ENCODE measurements at regions of chr2 and their contacts with region 1.

Region 1: GRCh38 chr2:112749755-112750559 is 14.5 kb downstream of the CKAP2L start:
- DNase-seq: peak; percentile 79
- CTCF ChIP-seq: peak; percentile 96

Region 2: GRCh38 chr2:112626604-112627059 is 123.3 kb before region 1 on chr2:
- CTCF ChIA-PET with region 1: interaction called, 15 read pairs
- POLR2A ChIA-PET with region 1: no interaction called
- DNase-seq: peak; percentile 70
- CTCF ChIP-seq: peak; percentile 93

Region 3: GRCh38 chr2:112774536-112775285 is 24.8 kb after region 1 on chr2:
- CTCF ChIA-PET with region 1: interaction called, 13 read pairs
- POLR2A ChIA-PET with region 1: no interaction called
- DNase-seq: no peak
- CTCF ChIP-seq: no peak

Region 4: DNA sequence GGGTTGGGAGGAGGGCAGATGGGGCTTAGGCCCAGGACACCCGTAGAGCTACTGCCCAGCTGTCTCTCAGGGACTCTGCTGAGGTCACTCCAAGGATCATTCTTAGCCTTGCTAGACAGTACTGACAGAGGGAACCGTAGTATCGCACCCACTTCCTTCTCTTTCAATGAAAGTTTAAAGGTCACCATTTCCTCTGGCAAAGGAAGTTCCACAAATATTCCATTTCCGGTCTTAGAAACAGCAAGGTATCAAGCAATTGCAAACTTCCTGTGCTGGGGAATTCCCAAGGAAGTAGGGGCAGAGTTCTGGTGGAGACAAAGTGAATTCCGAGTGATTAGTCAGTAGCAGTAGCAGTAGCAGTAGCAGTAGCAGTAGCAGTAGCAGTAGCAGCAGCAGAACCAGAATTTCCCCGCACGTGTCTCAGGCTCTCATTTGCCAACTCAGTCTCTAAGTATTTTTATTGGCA is 61.9 kb after region 1 on chr2:
- CTCF ChIA-PET with region 1: interaction called, 11 read pairs
- POLR2A ChIA-PET with region 1: no interaction called
- DNase-seq: no peak
- CTCF ChIP-seq: no peak

Region 5: GRCh38 chr2:112891385-112891831 is 141.5 kb after region 1 on chr2:
- CTCF ChIA-PET with region 1: interaction called, 275 read pairs
- POLR2A ChIA-PET with region 1: no interaction called
- DNase-seq: no peak
- CTCF ChIP-seq: no peak

Region 6: DNA sequence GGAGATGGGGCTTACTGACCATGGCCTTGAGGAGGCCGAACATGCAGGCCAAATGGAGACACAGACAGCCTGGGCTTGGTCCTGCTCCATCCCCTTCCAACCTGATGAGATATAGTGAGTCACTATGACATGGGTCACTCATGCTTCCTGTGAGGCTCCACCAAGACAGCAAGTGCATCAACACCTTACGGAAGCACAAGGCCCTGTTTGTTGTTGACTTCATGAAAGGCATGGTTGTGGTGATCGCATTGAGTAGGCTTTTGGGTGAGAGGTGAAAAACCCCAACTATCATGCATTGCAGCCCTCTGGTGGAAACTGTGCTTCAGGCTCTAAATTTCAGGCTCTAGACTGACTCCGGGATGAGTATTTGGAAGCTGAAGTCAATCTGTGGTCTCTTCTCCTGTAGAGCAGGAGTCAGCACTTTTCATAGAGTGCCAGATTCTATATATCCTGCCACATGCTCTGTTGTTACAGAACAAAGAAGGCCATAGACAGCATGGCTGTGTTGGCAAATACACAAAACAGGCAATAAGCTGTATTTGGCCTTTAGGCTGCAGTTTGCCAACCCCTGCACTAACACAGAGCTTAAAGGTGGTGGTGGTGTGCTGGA is 171.1 kb after region 1 on chr2:
- CTCF ChIA-PET with region 1: interaction called, 14 read pairs
- POLR2A ChIA-PET with region 1: no interaction called
- DNase-seq: no peak
- CTCF ChIP-seq: no peak

Region 7: DNA sequence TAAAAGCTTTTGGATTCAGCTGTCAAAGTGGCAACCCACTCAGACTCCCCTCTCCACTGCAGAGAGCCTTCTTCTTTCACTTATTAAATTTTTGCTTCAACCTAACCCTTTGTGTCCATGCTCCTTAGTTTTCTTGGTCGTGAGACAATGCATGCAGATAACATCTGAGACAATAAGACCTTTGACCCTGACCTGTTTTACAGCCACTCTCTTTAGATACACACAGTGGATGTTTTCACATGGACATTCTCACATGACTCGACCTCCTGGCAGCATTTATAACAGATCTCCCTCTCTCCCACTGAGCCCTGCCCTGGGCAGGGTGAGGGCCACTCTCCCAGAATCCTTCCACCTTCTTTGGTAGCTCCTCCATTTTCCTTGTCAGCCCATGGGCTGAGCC is 197.4 kb after region 1 on chr2:
- CTCF ChIA-PET with region 1: interaction called, 162 read pairs
- POLR2A ChIA-PET with region 1: no interaction called
- DNase-seq: no peak
- CTCF ChIP-seq: no peak

Region 8: DNA sequence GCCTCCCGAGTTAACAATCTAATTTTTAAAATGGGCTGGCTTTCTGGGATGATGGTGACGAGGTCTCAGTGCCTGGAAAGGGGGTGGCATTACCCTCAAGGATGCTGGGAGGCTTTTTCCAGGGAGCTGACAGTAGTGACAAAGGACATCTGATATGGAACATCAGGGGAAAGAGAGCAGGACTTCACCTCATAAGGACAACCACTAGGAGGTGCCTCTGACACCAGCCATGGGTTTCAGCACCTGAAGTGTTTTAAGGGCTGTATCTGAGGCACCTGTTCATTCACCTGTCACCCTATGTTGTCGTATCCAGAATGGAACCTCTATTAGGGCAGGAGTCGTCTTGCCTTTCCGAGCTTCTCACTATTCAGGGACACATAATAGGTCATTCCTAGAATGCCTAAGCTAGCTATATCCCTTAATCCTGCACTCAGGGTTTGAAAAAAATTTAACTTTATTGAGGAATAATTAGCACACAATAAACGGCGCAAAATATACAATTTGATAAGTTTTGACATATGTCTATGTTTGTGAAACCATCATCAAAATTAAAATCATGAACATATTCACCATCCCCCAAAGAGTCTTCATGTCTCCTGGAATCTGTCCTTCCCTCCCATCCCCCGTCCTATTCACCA is 292.0 kb after region 1 on chr2:
- CTCF ChIA-PET with region 1: no interaction called
- POLR2A ChIA-PET with region 1: no interaction called
- DNase-seq: no peak
- CTCF ChIP-seq: no peak

Measured in GM10248 (cell line).